ENCODE measurements at regions of chr9 and their contacts with region 1.

Region 1: DNA sequence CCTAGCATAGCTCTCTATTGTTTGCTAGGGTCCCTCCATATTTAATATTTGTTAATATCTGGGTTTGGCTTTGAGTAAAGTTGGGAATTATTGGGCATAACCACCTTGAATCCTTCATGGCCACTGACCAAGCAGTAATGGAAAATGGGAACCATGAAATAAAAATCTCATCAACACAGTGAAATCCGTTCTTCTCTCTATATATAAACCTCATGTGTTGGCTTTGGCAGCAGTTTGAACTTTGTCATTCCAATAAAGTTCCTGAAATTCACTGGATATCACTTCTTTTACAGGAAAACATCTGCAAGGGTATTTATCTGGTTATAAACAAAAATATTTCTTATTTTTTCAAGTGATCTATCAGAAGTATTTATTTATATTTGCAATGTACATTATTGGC is 93.0 kb upstream of the MPDZ start:
- DNase-seq: no peak
- H3K4me3 Mint-ChIP-seq: no peak overlapping the region
- H3K27ac Mint-ChIP-seq: no peak overlapping the region
- H3K4me1 Mint-ChIP-seq: no peaks in the 10 kb centered on the region
- H3K27me3 Mint-ChIP-seq: peaks cover 25% of the 10 kb centered on the region
- CTCF ChIP-seq: no peak

Region 2: DNA sequence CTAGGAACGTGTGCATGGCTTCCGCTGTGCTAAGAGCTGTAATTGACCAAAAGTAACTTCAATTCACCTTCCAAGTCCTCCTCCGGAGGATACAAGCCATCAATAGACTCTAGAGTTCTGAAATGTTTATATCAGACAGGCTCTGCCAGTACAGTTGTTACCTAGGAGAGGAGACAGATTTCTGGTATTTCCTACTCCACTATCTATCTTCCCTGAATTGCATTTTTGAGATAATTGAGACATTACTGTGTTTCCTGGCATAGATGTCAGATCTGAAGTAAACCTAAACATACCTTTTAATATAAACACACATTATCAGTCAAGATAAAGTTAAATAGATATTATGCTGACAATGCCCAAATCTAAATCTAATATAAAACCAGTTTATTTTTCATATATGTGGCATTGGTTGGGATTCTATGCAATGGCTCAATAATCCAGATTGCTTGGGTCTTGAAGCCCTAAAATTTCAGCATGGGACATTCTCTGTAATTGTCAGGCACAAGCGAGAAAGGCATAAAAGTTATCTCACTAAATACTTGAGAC is 687.5 kb before region 1 on chr9:
- CTCF ChIA-PET with region 1: interaction called, 10 read pairs
- intact Hi-C with region 1: no loop called
- DNase-seq: no peak
- H3K4me3 Mint-ChIP-seq: no peak overlapping the region
- H3K27ac Mint-ChIP-seq: no peak overlapping the region
- H3K4me1 Mint-ChIP-seq: no peaks in the 10 kb centered on the region
- H3K27me3 Mint-ChIP-seq: no peaks in the 10 kb centered on the region
- CTCF ChIP-seq: no peak

Region 3: DNA sequence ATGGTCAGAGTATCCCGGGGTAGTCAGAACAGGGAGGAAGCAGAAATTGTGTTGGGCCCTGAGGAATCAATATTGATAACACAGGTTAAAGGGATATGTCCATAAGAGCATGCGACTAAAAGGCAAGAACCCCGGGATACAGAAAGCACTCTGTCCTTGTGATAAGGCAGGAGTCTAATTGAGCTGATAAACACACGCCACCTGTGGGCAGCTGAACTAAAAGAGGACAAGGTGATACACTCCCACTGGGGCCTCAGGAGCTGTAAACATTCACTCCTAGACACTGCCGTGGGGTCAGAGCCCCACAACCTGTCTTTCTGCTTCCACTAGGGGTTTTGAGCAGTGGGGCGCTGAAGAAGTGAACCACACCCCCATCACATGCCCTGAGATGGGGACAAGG is 51.7 kb after region 1 on chr9:
- CTCF ChIA-PET with region 1: no interaction called
- intact Hi-C with region 1: no loop called
- DNase-seq: no peak
- H3K4me3 Mint-ChIP-seq: no peak overlapping the region
- H3K27ac Mint-ChIP-seq: no peak overlapping the region
- H3K4me1 Mint-ChIP-seq: no peaks in the 10 kb centered on the region
- H3K27me3 Mint-ChIP-seq: no peaks in the 10 kb centered on the region
- CTCF ChIP-seq: no peak

Measured in Calu3 (cell line).